Breast epithelium (tissue), 4 donors: ENCODE measurements at regions of chr10 and their contacts with region 1.

Region 1: GRCh38 chr10:132107186-132107948 is 41.6 kb downstream of the JAKMIP3 start:
- DNase-seq: peak in 1 of 2 donors; percentile 46
- H3K4me3 ChIP-seq: no peak overlapping the region
- H3K27ac ChIP-seq: no peak overlapping the region
- H3K4me1 ChIP-seq: no peaks in the 10 kb centered on the region
- H3K27me3 ChIP-seq: no peaks in the 10 kb centered on the region
- CTCF ChIP-seq: no peak
- POLR2A ChIP-seq: no peak

Region 2: DNA sequence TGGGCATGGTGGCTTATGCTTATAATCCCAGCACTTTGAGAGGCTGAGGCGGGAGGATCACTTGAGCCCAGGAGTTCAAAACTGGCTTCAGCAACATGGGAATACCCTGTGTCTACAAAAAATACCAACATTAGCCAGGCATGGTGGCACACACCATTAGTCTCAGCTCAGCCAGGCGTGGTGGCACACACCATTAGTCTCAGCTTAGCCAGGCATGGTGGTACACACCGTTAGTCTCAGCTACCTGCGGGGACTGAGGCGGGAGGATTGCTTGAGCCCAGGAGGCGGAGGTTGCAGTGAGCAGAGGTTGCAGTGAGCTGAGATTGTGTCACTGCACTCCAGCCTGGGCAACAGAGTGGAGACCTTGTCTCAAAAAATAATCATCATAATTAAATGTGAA is 233.7 kb after region 1 on chr10:
- intact Hi-C with region 1: loop called (anchors 5 kb)
- DNase-seq: no peak
- H3K4me3 ChIP-seq: no peak overlapping the region
- H3K27ac ChIP-seq: no peak overlapping the region
- H3K4me1 ChIP-seq: no peaks in the 10 kb centered on the region
- H3K27me3 ChIP-seq: no peaks in the 10 kb centered on the region
- CTCF ChIP-seq: no peak
- POLR2A ChIP-seq: no peak